ENCODE measurements at regions of chr4 and their contacts with region 1.

Region 1: DNA sequence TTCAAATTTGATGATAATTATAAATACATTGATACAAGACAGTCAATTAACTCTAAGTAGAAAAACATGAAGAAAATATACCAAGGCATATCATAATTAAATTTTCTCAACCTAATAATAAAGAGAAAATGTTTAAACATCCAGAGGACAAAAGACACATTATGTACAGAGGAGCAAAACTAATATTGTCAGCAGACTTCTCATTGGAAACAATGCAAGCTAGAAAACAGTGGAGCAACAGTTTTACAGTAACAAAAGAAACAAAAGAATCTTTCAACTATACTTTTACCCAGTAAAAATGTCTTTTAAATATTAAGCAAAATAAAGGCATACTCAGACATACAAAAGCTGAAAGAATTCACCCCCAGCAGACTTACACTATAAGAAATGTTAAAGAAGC is 238.0 kb downstream of the TMA16 start:
- DNase-seq: no peak
- H3K4me3 ChIP-seq: no peak overlapping the region
- H3K27ac ChIP-seq: no peak overlapping the region
- H3K4me1 ChIP-seq: no peaks in the 10 kb centered on the region
- H3K27me3 ChIP-seq: no peaks in the 10 kb centered on the region
- CTCF ChIP-seq: no peak
- POLR2A ChIP-seq: no peak

Region 2: DNA sequence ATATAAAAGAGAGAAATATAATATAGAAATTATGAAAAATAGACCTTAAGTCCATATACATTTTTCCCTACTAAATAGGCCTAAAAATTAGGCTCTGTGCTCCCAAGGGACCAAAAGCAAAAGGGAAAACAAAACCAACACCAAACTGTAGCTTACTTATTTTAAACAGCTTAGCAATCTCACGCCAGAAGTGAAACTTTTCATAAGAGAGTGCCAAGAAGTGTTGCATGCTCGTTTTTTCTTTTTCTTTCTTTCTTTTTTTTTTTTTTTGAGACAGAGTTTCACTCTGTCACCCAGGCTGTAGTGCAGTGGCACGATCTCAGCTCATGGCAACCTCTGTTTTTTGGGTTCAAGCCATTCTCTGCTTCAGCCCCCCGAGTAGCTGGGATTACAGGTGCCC is 12.4 kb after region 1 on chr4:
- intact Hi-C with region 1: no loop called
- DNase-seq: no peak
- H3K4me3 ChIP-seq: no peak overlapping the region
- H3K27ac ChIP-seq: no peak overlapping the region
- H3K4me1 ChIP-seq: no peaks in the 10 kb centered on the region
- H3K27me3 ChIP-seq: no peaks in the 10 kb centered on the region
- CTCF ChIP-seq: no peak
- POLR2A ChIP-seq: no peak

Region 3: DNA sequence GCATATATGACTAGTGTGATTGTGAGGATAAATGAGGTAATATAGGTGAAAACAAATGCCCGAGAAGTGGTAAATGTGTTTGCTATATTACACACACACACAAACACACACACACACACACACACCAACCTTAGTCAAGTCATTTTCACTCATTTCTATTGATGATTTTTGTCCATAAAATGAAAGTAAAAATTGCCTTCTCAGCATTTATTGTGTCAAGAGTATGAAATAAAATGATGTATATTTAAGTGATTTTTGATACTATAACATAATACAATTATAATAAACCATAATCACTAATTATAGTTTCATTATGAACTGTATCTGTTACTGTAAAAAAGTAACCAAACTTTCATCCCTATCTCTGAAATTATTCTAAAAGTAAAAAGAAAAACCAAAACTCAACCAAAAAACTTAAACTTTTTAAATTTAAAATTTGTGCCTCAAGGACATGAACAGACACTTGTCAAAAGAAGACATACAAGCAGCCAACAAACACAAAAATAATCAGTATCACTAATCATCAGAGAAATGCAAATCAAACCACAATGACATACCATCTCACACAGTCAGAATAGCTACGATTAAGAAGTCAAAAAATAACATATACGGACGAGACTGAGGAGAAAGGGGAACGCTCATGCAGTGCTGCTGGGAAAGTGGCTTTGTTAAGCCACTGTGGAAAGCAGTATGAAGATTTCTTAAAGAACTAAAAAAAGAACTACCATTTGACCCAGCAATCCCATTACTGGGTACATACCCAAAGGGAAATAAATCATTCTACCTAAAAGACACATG is 363.0 kb after region 1 on chr4:
- intact Hi-C with region 1: loop called (anchors 5 kb)
- DNase-seq: no peak
- H3K4me3 ChIP-seq: no peak overlapping the region
- H3K27ac ChIP-seq: no peak overlapping the region
- H3K4me1 ChIP-seq: no peaks in the 10 kb centered on the region
- H3K27me3 ChIP-seq: no peaks in the 10 kb centered on the region
- CTCF ChIP-seq: no peak
- POLR2A ChIP-seq: no peak

Region 4: DNA sequence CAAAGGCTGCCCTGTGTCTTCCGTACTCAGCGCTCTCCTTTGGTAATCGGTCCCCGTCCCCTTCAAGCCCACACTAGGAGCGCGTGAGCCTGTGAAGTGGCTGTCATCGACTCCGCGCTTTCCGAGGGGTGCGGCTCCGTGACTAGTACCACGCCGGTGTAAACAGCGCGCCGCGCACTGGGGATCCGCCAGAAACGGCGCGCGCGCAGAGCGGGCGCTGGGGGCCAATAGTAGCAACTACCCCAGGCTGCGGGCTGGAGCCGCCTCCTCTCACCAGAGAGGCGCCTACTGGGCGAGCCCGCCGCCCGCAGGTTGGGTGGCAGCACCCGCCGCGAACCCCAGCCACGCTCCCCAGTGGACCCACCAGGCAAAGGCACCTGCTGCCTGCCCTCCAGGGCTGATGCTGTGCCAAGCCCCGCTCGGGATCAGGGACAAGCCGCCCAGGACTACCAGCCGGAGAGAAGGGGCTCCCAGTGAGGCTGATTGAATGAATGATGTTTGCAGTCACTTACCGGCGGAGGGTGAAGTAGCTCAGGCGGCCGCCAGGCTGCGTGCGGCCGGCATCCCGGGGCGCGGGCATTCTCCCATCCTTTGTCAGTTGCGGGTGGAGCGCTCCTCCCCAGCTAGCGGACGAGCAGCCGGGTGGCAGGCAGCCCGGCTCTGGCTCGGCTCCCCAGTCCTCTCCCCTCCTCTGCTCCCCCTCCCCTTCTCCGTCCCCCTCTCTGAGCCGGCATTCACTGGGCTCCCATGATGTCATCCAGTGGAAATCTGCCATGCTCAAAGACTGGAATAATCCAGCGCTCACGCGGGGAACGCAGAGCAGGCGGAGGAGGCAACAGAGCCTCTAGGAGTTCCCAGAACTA is 651.1 kb after region 1 on chr4:
- intact Hi-C with region 1: no loop called
- DNase-seq: no peak
- H3K4me3 ChIP-seq: peak overlapping the region; percentile 27 to 51 (median 33)
- H3K27ac ChIP-seq: no peak overlapping the region
- H3K4me1 ChIP-seq: no peaks in the 10 kb centered on the region
- H3K27me3 ChIP-seq: peaks cover 0 to 25% of the 10 kb centered on the region in 2 donors
- CTCF ChIP-seq: no peak
- POLR2A ChIP-seq: no peak

Measured in breast epithelium (tissue), 4 donors.